ENCODE measurements at regions of chr11 and their contacts with region 1.

Region 1: GRCh38 chr11:76721755-76722677 is 51.5 kb upstream of the LRRC32 start:
- DNase-seq: peak; percentile 84
- ATAC-seq: peak; percentile 97
- H3K4me3 Mint-ChIP-seq: no peak overlapping the region
- H3K27ac Mint-ChIP-seq: no peak overlapping the region
- H3K4me1 Mint-ChIP-seq: peaks cover 6% of the 10 kb centered on the region
- H3K27me3 Mint-ChIP-seq: peaks cover 13% of the 10 kb centered on the region

Region 2: GRCh38 chr11:76734456-76735420 is 12.7 kb after region 1 on chr11:
- CTCF ChIA-PET with region 1: interaction called, 15 read pairs
- POLR2A ChIA-PET with region 1: no interaction called
- DNase-seq: no peak
- ATAC-seq: no peak
- H3K4me3 Mint-ChIP-seq: no peak overlapping the region
- H3K27ac Mint-ChIP-seq: no peak overlapping the region
- H3K4me1 Mint-ChIP-seq: peaks cover 6% of the 10 kb centered on the region
- H3K27me3 Mint-ChIP-seq: peaks cover 6% of the 10 kb centered on the region

Region 3: DNA sequence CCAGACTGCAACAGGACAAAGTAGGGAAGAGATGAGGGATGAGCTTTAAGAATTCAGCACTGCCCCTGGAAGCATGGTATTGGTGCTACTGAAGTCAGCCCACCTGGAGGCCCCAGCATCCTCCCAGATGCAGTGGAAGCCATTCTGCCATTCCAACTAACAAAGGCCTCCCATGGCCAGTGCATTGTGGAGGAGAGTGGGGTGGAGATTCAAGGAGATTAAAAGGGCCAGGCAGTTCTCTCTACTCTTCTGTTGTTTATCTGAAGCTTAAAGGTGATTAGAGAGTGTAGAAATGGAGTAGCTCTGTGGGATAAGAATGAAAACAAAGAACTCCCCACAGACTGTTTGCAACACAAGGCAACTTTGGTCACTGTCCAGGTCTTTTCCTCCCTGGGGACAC is 37.1 kb after region 1 on chr11:
- CTCF ChIA-PET with region 1: interaction called, 14 read pairs
- POLR2A ChIA-PET with region 1: no interaction called
- DNase-seq: no peak
- ATAC-seq: no peak
- H3K4me3 Mint-ChIP-seq: no peak overlapping the region
- H3K27ac Mint-ChIP-seq: no peak overlapping the region
- H3K4me1 Mint-ChIP-seq: no peaks in the 10 kb centered on the region
- H3K27me3 Mint-ChIP-seq: peaks cover 8% of the 10 kb centered on the region

Measured in activated CD8-positive, alpha-beta T cell treated with anti-CD3 and anti-CD28 coated beads, Interleukin-2, amount 10 ng/mL, durations not matched to agents 7 days and 5 days (primary cell).